Dendritic cell treated with granulocyte-macrophage colony-stimulating factor and Interleukin-4, amounts not matched to agents 40 ng/mL and 50 ng/mL, for 4 days (primary cell): ENCODE measurements at regions of chr12 and their contacts with region 1.

Region 1: DNA sequence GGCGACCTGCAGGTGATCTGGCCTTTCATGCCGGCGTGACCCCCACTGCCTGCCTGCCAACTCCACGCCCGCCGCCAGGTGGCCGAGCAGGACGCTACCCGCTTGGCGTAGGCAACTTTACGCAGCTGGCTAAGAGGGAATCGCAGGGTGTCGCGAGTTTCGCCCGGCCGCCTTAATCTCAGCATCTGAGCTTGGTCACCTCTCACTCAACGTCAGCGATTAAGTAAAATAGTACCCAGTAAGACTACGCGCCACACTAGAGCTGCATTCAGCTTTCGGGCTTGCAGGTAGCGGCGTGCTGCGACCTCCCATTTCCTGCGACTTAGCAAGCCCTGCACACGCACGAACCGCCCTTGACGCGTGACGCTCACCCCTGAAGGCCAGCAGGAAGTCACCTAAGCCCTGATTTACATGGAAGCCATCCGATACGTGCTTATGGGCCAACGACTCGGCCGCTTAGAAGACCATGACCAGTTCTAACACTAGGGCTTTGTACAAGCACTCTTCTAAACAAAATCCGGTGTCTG is 33.2 kb downstream of the WBP11 start:
- H3K4me3 Mint-ChIP-seq: peak overlapping the region; percentile 91
- H3K27ac Mint-ChIP-seq: peak overlapping the region; percentile 99
- H3K4me1 Mint-ChIP-seq: peaks cover 28% of the 10 kb centered on the region
- H3K27me3 Mint-ChIP-seq: no peaks in the 10 kb centered on the region

Region 2: GRCh38 chr12:14567351-14568162 is 202.5 kb before region 1 on chr12 and contains the start of gene PLBD1:
- intact Hi-C with region 1: loop called (anchors 2 kb)
- H3K4me3 Mint-ChIP-seq: peak within 1 kb of the TSS; percentile 77
- H3K27ac Mint-ChIP-seq: peak within 1 kb of the TSS; percentile 87
- H3K4me1 Mint-ChIP-seq: peaks cover 41% of the 10 kb centered on the region
- H3K27me3 Mint-ChIP-seq: no peaks in the 10 kb centered on the region

Region 3: GRCh38 chr12:14803011-14803829 is 33.2 kb after region 1 on chr12 and contains the starts of genes C12orf60 and WBP11:
- intact Hi-C with region 1: loop called (anchors 1 kb)
- H3K4me3 Mint-ChIP-seq: no peak within 1 kb of the TSS
- H3K27ac Mint-ChIP-seq: no peak within 1 kb of the TSS
- H3K4me1 Mint-ChIP-seq: peaks cover 10% of the 10 kb centered on the region
- H3K27me3 Mint-ChIP-seq: no peaks in the 10 kb centered on the region

Region 4: DNA sequence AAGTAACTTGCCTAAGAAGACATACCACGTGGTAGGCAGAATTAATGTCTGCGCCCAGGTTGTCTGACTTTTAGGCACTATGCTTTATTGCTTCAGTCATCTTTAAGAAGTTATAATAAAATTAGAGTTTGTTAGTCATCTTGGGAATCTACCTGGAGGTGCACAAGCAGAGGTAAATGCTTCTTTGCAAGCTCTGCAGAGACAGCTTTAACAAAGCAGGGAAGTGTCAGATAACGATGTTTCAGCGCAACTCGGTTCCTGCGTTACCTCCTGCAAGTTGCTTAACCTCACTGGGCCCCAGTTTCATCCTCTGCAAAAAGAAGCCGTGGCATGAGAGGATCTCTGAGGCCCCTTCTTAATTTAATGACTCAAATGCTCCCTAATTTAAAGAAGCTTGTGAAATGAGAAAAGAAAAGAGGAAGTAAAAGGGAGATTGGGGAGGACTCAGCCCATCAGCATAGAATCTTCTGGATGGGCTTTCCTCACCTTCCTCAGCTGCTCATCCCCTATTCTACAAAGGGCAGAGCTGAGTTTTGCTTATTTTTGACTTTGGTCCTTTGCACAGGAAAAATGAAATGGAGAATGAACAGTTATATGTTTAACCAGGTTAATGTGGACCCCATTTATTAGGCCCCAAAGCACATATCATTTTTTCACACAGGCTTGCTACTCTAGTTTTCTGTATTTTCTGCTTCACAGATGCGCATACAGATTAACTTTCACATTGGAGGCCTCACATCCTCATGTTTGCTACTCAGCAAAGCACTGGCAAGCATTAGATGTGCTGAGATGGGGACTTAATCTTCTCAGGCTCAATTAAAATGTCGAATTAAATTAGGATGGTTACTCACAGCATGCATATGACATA is 186.2 kb after region 1 on chr12:
- intact Hi-C with region 1: loop called (anchors 5 kb)
- H3K4me3 Mint-ChIP-seq: peak overlapping the region; percentile 45
- H3K27ac Mint-ChIP-seq: peak overlapping the region; percentile 99
- H3K4me1 Mint-ChIP-seq: peaks cover 69% of the 10 kb centered on the region
- H3K27me3 Mint-ChIP-seq: no peaks in the 10 kb centered on the region

Region 5: DNA sequence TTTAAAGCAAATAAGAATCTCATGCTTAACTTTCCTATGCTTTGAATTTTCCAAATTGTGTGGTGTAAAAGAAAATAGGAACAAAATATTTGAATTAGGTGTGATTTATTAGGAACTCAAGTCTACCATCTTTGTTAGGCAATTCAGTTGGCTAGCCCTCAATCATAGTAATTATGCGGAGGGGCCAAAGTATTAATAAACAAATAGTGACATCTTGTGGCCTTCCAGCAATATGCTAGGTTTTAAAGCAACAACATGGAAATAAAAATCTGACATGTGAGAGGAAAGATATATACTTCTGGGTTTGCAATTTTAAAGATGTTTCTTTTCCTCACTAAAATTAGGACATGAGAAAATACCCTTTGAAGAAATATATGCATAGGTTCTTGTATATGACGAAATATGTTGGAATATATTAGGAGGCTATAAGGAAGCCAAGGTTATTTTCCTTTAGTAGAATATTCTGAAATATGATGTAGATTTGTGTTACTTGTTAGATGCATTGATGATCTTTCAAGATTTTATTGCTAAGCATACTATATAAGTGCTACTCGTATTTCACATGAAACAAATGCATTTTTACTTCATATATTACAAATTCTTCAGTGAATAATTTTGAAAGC is 752.6 kb after region 1 on chr12:
- intact Hi-C with region 1: loop called (anchors 10 kb)
- H3K4me3 Mint-ChIP-seq: no peak overlapping the region
- H3K27ac Mint-ChIP-seq: no peak overlapping the region
- H3K4me1 Mint-ChIP-seq: peaks cover 13% of the 10 kb centered on the region
- H3K27me3 Mint-ChIP-seq: peaks cover 17% of the 10 kb centered on the region